ENCODE measurements at regions of chr12 and their contacts with region 1.

Region 1: DNA sequence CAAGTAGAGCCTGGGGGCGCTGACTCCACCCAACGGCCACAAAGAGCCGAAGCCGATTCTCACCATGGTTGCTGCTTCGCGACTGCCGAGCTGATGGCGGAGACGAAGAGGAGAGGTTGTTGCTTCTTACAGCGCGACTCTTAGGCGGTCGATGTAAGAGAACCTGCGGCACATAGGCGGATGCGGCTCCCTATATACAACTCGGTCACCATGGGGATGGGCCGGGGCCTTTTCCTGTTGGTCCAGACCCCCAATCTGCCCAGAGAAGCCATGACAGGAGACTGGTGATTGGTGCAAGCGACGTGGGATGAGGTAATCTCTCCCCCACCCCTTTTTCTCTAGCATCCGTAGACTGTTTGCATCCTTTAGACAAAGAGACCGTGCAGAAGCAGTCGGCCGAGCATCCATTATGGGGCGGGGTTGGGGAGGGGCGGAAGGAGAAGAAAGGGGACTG is at the start of gene TUBA1A:
- DNase-seq: peak; percentile 99
- ATAC-seq: peak; percentile 85
- H3K4me3 ChIP-seq: peak within 1 kb of the TSS; percentile 79 to 98 (median 90)
- H3K4me3 Mint-ChIP-seq: peak within 1 kb of the TSS; percentile 94
- H3K27ac ChIP-seq: peak within 1 kb of the TSS; percentile 94 to 99
- H3K27ac Mint-ChIP-seq: peak within 1 kb of the TSS; percentile 99
- H3K4me1 ChIP-seq: peaks cover 12 to 14% of the 10 kb centered on the region in 2 donors
- H3K4me1 Mint-ChIP-seq: peaks cover 18% of the 10 kb centered on the region
- H3K27me3 ChIP-seq: no peaks in the 10 kb centered on the region
- H3K27me3 Mint-ChIP-seq: no peaks in the 10 kb centered on the region
- CTCF ChIP-seq: no peak
- total RNA-seq, gene TUBA1A: 137 and 142 TPM in 2 replicates

Region 2: GRCh38 chr12:49069507-49070346 is 119.2 kb before region 1 on chr12 and contains the start of gene RHEBL1:
- CTCF ChIA-PET with region 1: interaction called, 3 read pairs
- POLR2A ChIA-PET with region 1: interaction called, 14 read pairs
- intact Hi-C with region 1: no loop called
- DNase-seq: peak; percentile 99
- ATAC-seq: peak; percentile 100
- H3K4me3 ChIP-seq: peak within 1 kb of the TSS; percentile 69 to 96 (median 87)
- H3K4me3 Mint-ChIP-seq: peak within 1 kb of the TSS; percentile 94
- H3K27ac ChIP-seq: peak within 1 kb of the TSS; percentile 61 to 92
- H3K27ac Mint-ChIP-seq: peak within 1 kb of the TSS; percentile 86
- H3K4me1 ChIP-seq: peaks cover 10 to 15% of the 10 kb centered on the region in 2 donors
- H3K4me1 Mint-ChIP-seq: peaks cover 19% of the 10 kb centered on the region
- H3K27me3 ChIP-seq: no peaks in the 10 kb centered on the region
- H3K27me3 Mint-ChIP-seq: no peaks in the 10 kb centered on the region
- CTCF ChIP-seq: no peak
- total RNA-seq, gene RHEBL1: 3.0 TPM in 2 replicates

Region 3: DNA sequence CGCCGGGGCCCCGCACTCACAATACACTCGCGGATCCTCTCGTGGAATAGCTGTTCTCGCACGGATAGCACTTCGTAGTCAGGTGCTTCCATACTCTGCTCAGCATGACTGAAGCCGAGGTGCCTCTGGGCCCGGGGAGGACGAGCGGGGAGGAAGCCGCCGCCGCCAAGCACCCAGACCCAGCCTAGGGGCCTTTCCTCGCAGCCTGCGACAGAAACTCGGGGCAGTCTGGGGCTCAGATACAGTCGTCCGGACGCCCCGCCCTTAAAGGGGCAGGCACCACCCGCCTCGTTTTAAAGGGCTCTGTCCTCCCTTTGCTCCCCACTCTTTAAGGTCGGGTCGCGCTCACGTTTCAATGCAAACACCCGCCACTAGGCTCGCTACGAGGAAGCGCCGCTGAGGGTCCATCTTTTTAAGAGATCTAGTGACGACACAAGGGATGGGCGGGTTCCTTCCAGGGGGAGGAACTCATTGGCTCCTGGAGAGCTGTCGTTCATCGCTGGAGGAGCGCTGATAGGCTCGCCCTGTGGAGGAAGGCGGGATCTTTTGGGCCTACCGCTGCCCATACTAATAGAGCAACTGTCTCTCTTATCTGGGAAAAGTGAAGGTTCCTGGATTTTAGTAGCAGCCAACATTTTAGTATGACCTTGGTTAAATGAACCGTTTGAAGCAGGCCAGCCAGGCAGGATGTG is 78.3 kb before region 1 on chr12 and contains the start of gene LMBR1L:
- CTCF ChIA-PET with region 1: interaction called, 7 read pairs
- POLR2A ChIA-PET with region 1: interaction called, 18 read pairs
- intact Hi-C with region 1: loop called (anchors 1 kb)
- DNase-seq: peak; percentile 99
- ATAC-seq: peak; percentile 93
- H3K4me3 ChIP-seq: peak within 1 kb of the TSS; percentile 61 to 99 (median 86)
- H3K4me3 Mint-ChIP-seq: peak within 1 kb of the TSS; percentile 96
- H3K27ac ChIP-seq: peak within 1 kb of the TSS; percentile 88 to 90
- H3K27ac Mint-ChIP-seq: peak within 1 kb of the TSS; percentile 96
- H3K4me1 ChIP-seq: peaks cover 16 to 23% of the 10 kb centered on the region in 2 donors
- H3K4me1 Mint-ChIP-seq: peaks cover 44% of the 10 kb centered on the region
- H3K27me3 ChIP-seq: no peaks in the 10 kb centered on the region
- H3K27me3 Mint-ChIP-seq: no peaks in the 10 kb centered on the region
- CTCF ChIP-seq: peak; percentile 66
- total RNA-seq, gene LMBR1L: 182 and 187 TPM in 2 replicates

Region 4: GRCh38 chr12:49200919-49201594 is 12.1 kb after region 1 on chr12:
- CTCF ChIA-PET with region 1: interaction called, 4 read pairs
- POLR2A ChIA-PET with region 1: interaction called, 3 read pairs
- intact Hi-C with region 1: loop called (anchors 1 kb)
- DNase-seq: peak; percentile 85
- ATAC-seq: peak; percentile 93
- H3K4me3 ChIP-seq: no peak overlapping the region
- H3K4me3 Mint-ChIP-seq: peak overlapping the region; percentile 15
- H3K27ac ChIP-seq: peak overlapping the region in 1 of 2 donors; percentile 44
- H3K27ac Mint-ChIP-seq: peak overlapping the region; percentile 23
- H3K4me1 ChIP-seq: peaks cover 10 to 12% of the 10 kb centered on the region in 2 donors
- H3K4me1 Mint-ChIP-seq: peaks cover 13% of the 10 kb centered on the region
- H3K27me3 ChIP-seq: no peaks in the 10 kb centered on the region
- H3K27me3 Mint-ChIP-seq: peaks cover 7% of the 10 kb centered on the region
- CTCF ChIP-seq: no peak

Region 5: DNA sequence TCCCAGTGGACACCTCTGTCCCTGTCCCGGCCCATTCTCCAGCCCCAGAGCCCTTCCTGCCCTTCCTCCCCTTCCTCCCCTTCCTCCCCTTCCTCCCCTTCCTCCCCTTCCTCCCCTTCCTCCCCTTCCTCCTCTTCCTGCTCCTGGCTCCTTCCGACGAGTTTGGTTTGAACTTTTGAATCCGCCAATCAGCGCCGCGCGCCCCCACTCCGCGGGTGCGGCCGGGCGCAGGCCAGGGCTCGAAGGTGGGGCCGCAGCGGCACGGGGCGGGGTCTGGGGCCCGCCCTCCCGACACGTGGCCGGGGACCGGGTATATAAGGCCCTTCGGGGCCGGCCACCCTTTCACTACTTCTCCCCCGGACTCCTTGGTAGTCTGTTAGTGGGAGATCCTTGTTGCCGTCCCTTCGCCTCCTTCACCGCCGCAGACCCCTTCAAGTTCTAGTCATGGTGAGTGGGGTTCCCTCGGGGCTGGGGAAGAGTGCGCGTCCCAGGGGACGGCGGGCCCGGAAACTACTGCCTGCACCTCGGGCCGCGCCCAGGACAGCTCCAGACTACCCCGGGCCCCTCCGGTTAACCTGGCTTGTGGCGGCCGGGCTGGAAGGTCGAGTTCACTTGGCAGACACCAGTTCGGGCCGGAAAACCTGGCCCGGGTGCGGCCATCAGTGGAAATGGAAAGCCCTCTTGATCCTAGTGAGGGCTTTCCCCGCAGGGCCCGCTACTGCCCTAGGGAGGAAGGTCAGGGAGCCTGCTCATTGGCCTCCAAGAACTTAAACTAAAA is 76.0 kb after region 1 on chr12 and contains the start of gene TUBA1C:
- CTCF ChIA-PET with region 1: interaction called, 3 read pairs
- POLR2A ChIA-PET with region 1: interaction called, 9 read pairs
- intact Hi-C with region 1: loop called (anchors 2 kb)
- DNase-seq: peak; percentile 92
- ATAC-seq: peak; percentile 93
- H3K4me3 ChIP-seq: peak within 1 kb of the TSS; percentile 42 to 98 (median 83)
- H3K4me3 Mint-ChIP-seq: peak within 1 kb of the TSS; percentile 97
- H3K27ac ChIP-seq: peak within 1 kb of the TSS; percentile 80 to 82
- H3K27ac Mint-ChIP-seq: peak within 1 kb of the TSS; percentile 94
- H3K4me1 ChIP-seq: peaks cover 4 to 12% of the 10 kb centered on the region in 2 donors
- H3K4me1 Mint-ChIP-seq: peaks cover 20% of the 10 kb centered on the region
- H3K27me3 ChIP-seq: no peaks in the 10 kb centered on the region
- H3K27me3 Mint-ChIP-seq: no peaks in the 10 kb centered on the region
- CTCF ChIP-seq: no peak
- total RNA-seq, gene TUBA1C: 34.9 and 35.2 TPM in 2 replicates

Region 6: DNA sequence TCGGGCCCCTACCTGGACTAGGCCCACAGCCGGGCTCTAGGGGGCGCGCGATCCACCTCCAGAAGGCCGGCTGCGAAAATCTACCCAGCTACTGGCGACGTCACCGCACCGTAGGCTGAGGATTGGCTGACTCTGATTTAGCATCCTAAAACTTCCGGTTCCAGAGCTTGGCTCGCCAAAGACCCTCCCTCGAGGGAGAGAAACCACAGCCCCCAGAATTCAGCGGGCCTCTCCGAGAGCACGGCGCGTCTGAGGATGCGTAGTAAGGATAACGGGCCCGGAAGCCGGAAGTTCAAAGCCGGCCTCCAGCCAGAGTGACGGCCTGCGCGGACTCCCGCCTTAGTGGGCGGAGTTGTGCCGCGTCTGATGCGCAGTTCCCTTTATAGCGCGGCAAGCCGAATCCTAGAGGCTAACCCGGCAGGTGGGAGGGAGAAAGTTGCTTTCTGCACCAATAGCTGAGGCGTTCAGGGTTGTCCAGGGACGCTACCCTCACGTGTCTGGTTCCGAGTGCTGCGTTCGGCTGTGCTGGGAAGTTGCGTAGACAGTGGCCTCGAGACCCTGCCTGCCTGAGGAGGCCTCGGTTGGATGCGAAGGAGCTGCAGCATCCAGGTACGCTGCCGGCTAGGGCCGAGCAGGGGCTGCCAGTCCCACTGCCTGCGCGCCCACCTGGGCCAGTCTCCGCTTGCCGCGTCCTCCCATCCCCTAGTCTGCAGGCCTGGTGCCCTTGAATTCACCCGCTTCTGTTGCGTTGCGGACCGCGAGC is 922.9 kb after region 1 on chr12 and contains the start of gene COX14:
- CTCF ChIA-PET with region 1: no interaction called
- POLR2A ChIA-PET with region 1: no interaction called
- intact Hi-C with region 1: loop called (anchors 5 kb)
- DNase-seq: peak; percentile 100
- ATAC-seq: peak; percentile 77
- H3K4me3 ChIP-seq: peak within 1 kb of the TSS; percentile 51 to 99 (median 88)
- H3K4me3 Mint-ChIP-seq: peak within 1 kb of the TSS; percentile 96
- H3K27ac ChIP-seq: peak within 1 kb of the TSS; percentile 85 to 96
- H3K27ac Mint-ChIP-seq: peak within 1 kb of the TSS; percentile 98
- H3K4me1 ChIP-seq: peaks cover 30 to 62% of the 10 kb centered on the region in 2 donors
- H3K4me1 Mint-ChIP-seq: peaks cover 65% of the 10 kb centered on the region
- H3K27me3 ChIP-seq: no peaks in the 10 kb centered on the region
- H3K27me3 Mint-ChIP-seq: no peaks in the 10 kb centered on the region
- CTCF ChIP-seq: peak; percentile 28
- total RNA-seq, gene COX14: 31.8 and 33.8 TPM in 2 replicates